Psoas muscle (tissue), 8 donors: ENCODE measurements at regions of chr14 and their contacts with region 1.

Region 1: GRCh38 chr14:39015360-39015961 is 87.6 kb downstream of the SEC23A start:
- DNase-seq: no peak
- ATAC-seq: peak in 1 of 4 donors; percentile 60
- H3K4me3 ChIP-seq: no peak overlapping the region
- H3K27ac ChIP-seq: no peak overlapping the region
- H3K4me1 ChIP-seq: no peaks in the 10 kb centered on the region
- H3K27me3 ChIP-seq: no peaks in the 10 kb centered on the region
- CTCF ChIP-seq: peak; percentile 84

Region 2: GRCh38 chr14:37903343-37904191 is 1111.9 kb before region 1 on chr14:
- intact Hi-C with region 1: loop called (anchors 5 to 10 kb)
- DNase-seq: no peak
- ATAC-seq: no peak
- H3K4me3 ChIP-seq: no peak overlapping the region
- H3K27ac ChIP-seq: no peak overlapping the region
- H3K4me1 ChIP-seq: no peaks in the 10 kb centered on the region
- H3K27me3 ChIP-seq: no peaks in the 10 kb centered on the region
- CTCF ChIP-seq: peak; percentile 67

Region 3: GRCh38 chr14:38721822-38722431 is 293.5 kb before region 1 on chr14:
- intact Hi-C with region 1: loop called in 1 of 2 experiments (anchors 5 kb)
- DNase-seq: peak; percentile 43 to 52
- ATAC-seq: peak; percentile 59 to 77 (median 64)
- H3K4me3 ChIP-seq: no peak overlapping the region
- H3K27ac ChIP-seq: no peak overlapping the region
- H3K4me1 ChIP-seq: peaks cover 5% of the 10 kb centered on the region
- H3K27me3 ChIP-seq: no peaks in the 10 kb centered on the region
- CTCF ChIP-seq: peak; percentile 75

Region 4: DNA sequence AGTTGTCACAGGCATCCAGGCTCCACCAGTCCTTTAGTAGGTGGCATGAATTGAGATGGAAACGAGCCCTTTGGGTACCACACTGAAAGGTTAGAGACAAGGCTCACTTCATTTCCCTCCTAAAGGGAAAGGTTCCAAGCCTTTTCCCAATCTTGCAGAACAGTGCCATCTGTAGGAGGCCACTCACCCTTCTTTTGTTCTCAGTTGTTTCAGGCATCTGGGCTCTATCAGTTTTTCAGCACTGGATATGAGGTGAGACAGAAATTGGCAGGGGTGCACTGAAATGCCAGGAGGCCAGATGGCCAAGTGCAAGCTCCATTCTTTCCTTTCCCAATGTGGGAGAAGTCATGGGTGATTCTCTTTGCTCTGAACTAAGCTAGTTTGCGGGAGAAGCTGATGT is 401.6 kb after region 1 on chr14:
- intact Hi-C with region 1: no loop called
- DNase-seq: no peak
- ATAC-seq: no peak
- H3K4me3 ChIP-seq: no peak overlapping the region
- H3K27ac ChIP-seq: no peak overlapping the region
- H3K4me1 ChIP-seq: no peaks in the 10 kb centered on the region
- H3K27me3 ChIP-seq: no peaks in the 10 kb centered on the region
- CTCF ChIP-seq: no peak